Heart right ventricle (tissue), 16 donors: ENCODE measurements at regions of chr3 and their contacts with region 1.

Region 1: GRCh38 chr3:148955544-148956346 is 35.6 kb upstream of the GYG1 start:
- DNase-seq: peak in 1 of 2 donors; percentile 72
- ATAC-seq: peak; percentile 84 to 92 (median 89)
- H3K4me3 ChIP-seq: no peak overlapping the region
- H3K27ac ChIP-seq: peak overlapping the region; percentile 31 to 84 (median 69)
- H3K4me1 ChIP-seq: peaks cover 0 to 11% (median 7%) of the 10 kb centered on the region in 9 donors
- H3K27me3 ChIP-seq: no peaks in the 10 kb centered on the region
- CTCF ChIP-seq: peak; percentile 34 to 73 (median 63)

Region 2: GRCh38 chr3:149016669-149017541 is 61.2 kb after region 1 on chr3:
- intact Hi-C with region 1: loop called in 2 of 10 experiments (anchors 10 kb)
- DNase-seq: no peak
- ATAC-seq: peak; percentile 31 to 65 (median 50)
- H3K4me3 ChIP-seq: no peak overlapping the region
- H3K27ac ChIP-seq: peak overlapping the region in 9 of 10 donors; percentile 23 to 65 (median 55)
- H3K4me1 ChIP-seq: peaks cover 6 to 74% (median 50%) of the 10 kb centered on the region in 9 donors
- H3K27me3 ChIP-seq: no peaks in the 10 kb centered on the region
- CTCF ChIP-seq: no peak

Region 3: DNA sequence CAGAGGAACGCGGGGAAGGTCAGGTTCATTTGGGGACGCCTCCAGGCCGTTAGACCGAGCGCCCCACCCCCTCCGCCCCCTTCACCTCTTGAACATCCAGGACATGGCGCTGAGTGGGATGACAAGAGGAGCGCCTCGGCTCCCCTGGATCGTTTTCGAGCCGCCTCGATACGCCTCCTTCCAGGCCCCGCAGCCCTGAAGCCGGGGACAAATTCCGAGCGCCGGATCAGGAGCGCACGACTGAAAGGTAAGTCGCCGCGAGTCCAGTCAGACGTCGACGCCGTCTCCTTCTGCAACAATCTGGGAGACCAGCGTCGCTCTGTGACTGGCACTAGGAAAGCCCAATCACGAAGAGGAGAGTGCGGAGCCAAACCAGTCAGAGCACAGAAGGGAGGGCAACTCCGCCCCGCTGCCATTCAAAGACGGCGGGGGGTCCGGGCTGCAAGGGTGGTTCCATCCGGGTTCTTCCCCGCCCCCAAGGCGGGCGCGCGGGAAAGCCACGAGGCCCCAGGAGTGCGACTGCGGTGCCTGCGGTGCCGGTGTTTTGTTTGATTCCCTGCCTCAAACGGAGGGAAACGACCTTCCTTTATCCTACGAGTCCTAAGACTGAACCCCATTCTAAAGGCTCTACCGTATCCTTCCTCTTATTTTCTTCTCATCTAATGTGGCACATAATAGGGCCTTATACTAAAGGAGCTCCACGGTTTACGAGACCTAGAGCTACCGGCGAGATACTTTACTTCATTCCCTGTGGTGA is 130.7 kb after region 1 on chr3 and contains the start of gene HLTF:
- intact Hi-C with region 1: loop called in 2 of 10 experiments (anchors 10 kb)
- DNase-seq: peak; percentile 94 to 98
- ATAC-seq: peak; percentile 100
- H3K4me3 ChIP-seq: peak within 1 kb of the TSS; percentile 54 to 87 (median 74)
- H3K27ac ChIP-seq: peak within 1 kb of the TSS in 9 of 10 donors; percentile 54 to 78 (median 70)
- H3K4me1 ChIP-seq: peaks cover 0 to 18% (median 10%) of the 10 kb centered on the region in 9 donors
- H3K27me3 ChIP-seq: no peaks in the 10 kb centered on the region
- CTCF ChIP-seq: no peak
- total RNA-seq, gene HLTF: 19.1 to 38.6 (median 30.6) TPM

Region 4: GRCh38 chr3:149120051-149120972 is 164.6 kb after region 1 on chr3:
- intact Hi-C with region 1: loop called in 9 of 10 experiments (anchors 5 to 10 kb)
- DNase-seq: peak in 1 of 2 donors; percentile 29
- ATAC-seq: peak in 7 of 8 donors; percentile 36 to 85 (median 76)
- H3K4me3 ChIP-seq: no peak overlapping the region
- H3K27ac ChIP-seq: no peak overlapping the region
- H3K4me1 ChIP-seq: peaks cover 0 to 5% (median 0%) of the 10 kb centered on the region in 9 donors
- H3K27me3 ChIP-seq: no peaks in the 10 kb centered on the region
- CTCF ChIP-seq: peak; percentile 17 to 80 (median 67)

Region 5: GRCh38 chr3:149273096-149273751 is 317.5 kb after region 1 on chr3:
- intact Hi-C with region 1: loop called (anchors 1 to 5 kb)
- DNase-seq: peak in 1 of 2 donors; percentile 62
- ATAC-seq: peak; percentile 69 to 93 (median 86)
- H3K4me3 ChIP-seq: no peak overlapping the region
- H3K27ac ChIP-seq: peak overlapping the region in 4 of 10 donors; percentile 19 to 65 (median 44)
- H3K4me1 ChIP-seq: peaks cover 0 to 34% (median 10%) of the 10 kb centered on the region in 9 donors
- H3K27me3 ChIP-seq: no peaks in the 10 kb centered on the region
- CTCF ChIP-seq: peak; percentile 82 to 99 (median 92)

Region 6: GRCh38 chr3:149575961-149576564 is 620.3 kb after region 1 on chr3:
- intact Hi-C with region 1: no loop called
- DNase-seq: peak in 1 of 2 donors; percentile 68
- ATAC-seq: peak; percentile 71 to 89 (median 80)
- H3K4me3 ChIP-seq: peak overlapping the region in 6 of 10 donors; percentile 2 to 22 (median 8)
- H3K27ac ChIP-seq: peak overlapping the region; percentile 68 to 93 (median 82)
- H3K4me1 ChIP-seq: peaks cover 6 to 100% (median 92%) of the 10 kb centered on the region in 9 donors
- H3K27me3 ChIP-seq: peaks cover 0 to 3% (median 0%) of the 10 kb centered on the region in 7 donors
- CTCF ChIP-seq: peak in 1 of 9 donors; percentile 11